Activated T-helper 1 cell treated with anti-CD3 and anti-CD28 coated beads, Interleukin-12 subunit alpha, Interleukin-12 subunit beta, Interleukin-2, Interleukin-4 antibody, amounts not matched to agents 30 ng/mL and 10 ng/mL and 1 ng/mL, durations not matched to agents 14 hours and 24 hours and 36 hours (primary cell): ENCODE measurements at regions of chr14 and their contacts with region 1.

Region 1: DNA sequence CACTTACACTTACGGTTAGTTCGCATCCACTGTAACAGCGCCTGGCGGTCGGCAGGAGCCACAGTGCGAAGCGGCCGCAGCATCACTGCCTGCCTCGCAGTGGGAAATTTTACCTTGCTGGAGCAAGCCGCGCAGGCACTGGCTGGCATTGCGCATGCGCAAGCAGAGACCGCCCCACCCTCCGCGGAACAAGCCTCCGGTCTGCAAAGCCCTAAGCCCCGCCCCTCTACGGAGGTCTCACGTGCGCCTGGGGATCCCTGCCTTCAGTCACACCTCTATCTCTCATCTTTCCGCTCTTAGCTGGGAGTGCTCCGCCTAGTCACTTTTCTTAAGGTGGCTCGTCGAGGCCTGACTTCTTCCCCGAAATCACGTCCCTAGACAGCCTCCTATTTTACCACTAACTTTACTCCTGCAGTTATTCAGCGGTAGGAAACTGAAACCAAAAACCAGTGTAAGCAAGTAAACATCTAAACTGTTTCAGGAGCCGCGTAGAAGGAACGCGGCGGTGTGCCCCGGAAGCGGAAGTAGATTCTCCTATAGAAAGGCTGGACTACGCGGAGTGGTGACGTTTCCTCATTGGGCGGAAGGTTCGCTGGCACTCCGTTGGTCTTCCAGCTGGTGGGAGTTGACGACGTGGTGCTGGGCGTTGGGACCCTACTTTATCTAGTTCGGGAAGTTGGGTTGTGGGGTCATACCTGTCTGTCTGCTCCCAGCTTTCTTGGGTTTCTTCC is at the start of gene SRP54:
- DNase-seq: peak; percentile 100
- H3K4me3 Mint-ChIP-seq: no peak within 1 kb of the TSS
- H3K27ac Mint-ChIP-seq: no peak within 1 kb of the TSS
- H3K4me1 Mint-ChIP-seq: peaks cover 6% of the 10 kb centered on the region
- H3K27me3 Mint-ChIP-seq: no peaks in the 10 kb centered on the region
- total RNA-seq, gene SRP54: 76.1 and 76.2 TPM in 2 replicates

Region 2: DNA sequence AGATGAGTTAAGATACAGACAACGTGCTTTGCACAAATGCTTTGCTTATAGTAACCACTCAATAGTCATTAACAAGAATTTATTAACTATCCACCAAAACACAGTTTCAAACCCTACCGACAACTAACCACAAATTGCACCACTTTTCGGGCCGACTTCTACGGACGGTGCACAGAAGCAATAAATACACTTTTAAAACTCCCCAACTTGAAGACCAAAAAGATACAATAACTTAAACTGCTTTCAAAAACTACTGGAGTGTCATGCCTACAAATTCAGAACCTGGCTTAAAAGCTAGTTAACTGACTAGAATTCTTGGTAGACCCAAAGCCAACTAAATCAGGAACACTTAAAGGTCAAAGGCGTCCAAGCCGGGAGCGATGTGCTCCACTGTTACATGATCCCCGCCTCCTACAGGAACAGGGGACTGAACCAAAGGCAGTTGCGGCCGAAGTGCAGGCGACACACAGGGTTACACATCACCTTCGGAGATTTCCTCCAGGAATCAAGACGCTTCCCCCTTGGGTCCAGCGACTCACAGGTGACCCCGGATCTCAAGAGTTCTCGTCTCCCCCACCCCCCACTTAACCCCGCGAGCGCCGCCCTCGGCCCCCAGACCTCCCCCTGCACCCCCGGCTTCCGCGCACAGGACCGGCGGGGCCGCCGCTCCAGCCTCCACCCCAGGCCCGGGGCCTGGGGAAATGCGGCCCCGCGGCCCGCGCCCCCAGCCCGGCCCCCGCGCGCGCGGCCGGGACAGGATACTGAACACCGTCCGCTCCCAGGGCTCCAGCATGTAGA is 521.0 kb before region 1 on chr14:
- intact Hi-C with region 1: loop called (anchors 5 kb)
- DNase-seq: no peak
- H3K4me3 Mint-ChIP-seq: peak overlapping the region; percentile 90
- H3K27ac Mint-ChIP-seq: peak overlapping the region; percentile 91
- H3K4me1 Mint-ChIP-seq: peaks cover 28% of the 10 kb centered on the region
- H3K27me3 Mint-ChIP-seq: no peaks in the 10 kb centered on the region

Region 3: GRCh38 chr14:34629657-34630529 is 352.7 kb before region 1 on chr14 and contains the start of gene SNX6:
- intact Hi-C with region 1: loop called (anchors 1 kb)
- DNase-seq: peak; percentile 76
- H3K4me3 Mint-ChIP-seq: peak within 1 kb of the TSS; percentile 95
- H3K27ac Mint-ChIP-seq: peak within 1 kb of the TSS; percentile 99
- H3K4me1 Mint-ChIP-seq: peaks cover 8% of the 10 kb centered on the region
- H3K27me3 Mint-ChIP-seq: peaks cover 11% of the 10 kb centered on the region
- total RNA-seq, gene SNX6: 70.3 and 75.6 TPM in 2 replicates

Region 4: GRCh38 chr14:34931206-34931605 is 51.4 kb before region 1 on chr14:
- intact Hi-C with region 1: loop called (anchors 1 kb)
- DNase-seq: peak; percentile 10
- H3K4me3 Mint-ChIP-seq: peak overlapping the region; percentile 59
- H3K27ac Mint-ChIP-seq: peak overlapping the region; percentile 81
- H3K4me1 Mint-ChIP-seq: peaks cover 35% of the 10 kb centered on the region
- H3K27me3 Mint-ChIP-seq: no peaks in the 10 kb centered on the region

Region 5: DNA sequence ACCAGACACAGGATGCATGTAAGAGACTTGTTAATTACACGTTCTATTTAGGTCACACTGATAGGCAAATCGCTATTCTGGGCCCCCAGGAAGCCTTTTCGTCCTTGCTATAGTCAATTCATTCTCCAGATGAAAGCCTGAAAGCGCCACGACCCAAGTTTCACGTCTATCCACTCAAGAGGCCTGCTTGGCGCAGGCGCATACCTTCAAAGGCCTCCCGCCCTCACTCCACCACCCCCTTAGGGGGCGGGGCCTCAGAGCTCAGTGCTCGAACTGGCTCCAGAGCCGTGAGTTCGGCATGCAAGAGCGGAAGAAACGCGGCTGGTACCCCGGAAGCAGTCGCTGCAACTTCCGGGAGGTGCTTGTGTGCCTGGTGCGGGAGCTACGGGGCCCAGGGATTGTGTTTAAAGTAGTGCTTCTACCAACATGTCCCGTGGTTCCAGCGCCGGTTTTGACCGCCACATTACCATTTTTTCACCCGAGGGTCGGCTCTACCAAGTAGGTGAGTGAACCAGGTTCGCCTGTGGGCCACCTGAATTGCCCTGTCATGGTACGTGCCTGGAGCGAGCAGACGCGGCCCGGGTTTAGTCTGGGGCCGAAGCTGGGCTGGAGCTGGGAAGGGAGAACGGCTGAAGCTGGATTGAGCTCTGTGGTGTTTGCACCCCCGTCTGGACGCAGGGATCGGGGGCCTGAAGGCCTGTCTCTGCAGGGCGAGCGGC is 309.6 kb after region 1 on chr14 and contains the start of gene PSMA6:
- intact Hi-C with region 1: loop called (anchors 1 kb)
- DNase-seq: peak; percentile 99
- H3K4me3 Mint-ChIP-seq: peak within 1 kb of the TSS; percentile 99
- H3K27ac Mint-ChIP-seq: peak within 1 kb of the TSS; percentile 94
- H3K4me1 Mint-ChIP-seq: peaks cover 56% of the 10 kb centered on the region
- H3K27me3 Mint-ChIP-seq: no peaks in the 10 kb centered on the region
- total RNA-seq, gene PSMA6: 475 and 479 TPM in 2 replicates